GM12878 (cell line): ENCODE measurements at regions of chr12 and their contacts with region 1.

Region 1: DNA sequence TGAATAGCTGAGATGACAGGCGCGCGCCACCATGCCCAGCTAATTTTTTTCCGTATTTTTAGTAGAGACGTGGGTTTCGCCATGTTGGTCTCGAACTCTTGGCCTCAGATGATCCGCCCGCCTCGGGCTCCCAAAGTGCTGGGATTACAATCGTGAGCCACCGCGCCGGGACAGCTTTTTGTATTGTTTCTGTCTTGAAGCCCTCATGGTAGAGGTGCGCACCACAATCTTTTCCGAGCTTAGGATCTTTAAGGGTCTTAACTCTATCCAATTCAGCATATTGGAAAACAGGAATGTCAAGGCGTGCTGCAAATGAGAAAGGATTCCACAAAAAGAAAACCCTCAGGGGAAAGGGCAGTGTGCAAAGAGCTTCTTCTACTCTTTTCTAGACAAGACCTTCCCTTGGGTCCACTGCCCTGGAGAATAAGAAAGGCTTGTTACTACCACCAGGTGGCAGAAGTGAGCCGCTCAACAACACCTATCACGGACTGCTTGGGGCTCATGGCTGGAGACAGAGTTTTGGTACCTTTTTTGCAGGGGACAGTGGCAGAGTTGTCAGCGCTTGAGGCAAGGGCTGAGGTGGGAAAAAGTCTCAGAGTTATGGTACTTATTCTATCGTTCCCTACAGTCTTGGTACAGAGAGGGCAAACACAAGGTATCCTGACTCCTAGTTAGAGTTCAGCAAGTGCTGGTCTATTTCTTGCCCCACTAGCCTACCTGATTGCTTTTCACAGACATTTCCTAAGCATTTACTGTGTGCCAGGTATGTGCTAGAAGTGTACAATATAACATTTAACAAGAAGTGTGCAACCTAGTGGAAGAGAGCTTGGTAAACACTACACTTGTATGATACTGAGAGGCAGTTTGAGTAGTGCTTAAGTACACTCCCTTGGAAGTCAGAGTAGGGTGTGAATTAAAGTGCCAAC is 16.4 kb upstream of the SP7 start:
- DNase-seq: peak; percentile 68
- ATAC-seq: peak; percentile 100
- H3K4me3 ChIP-seq: no peak overlapping the region
- H3K27ac ChIP-seq: no peak overlapping the region
- H3K4me1 ChIP-seq: peaks cover 2% of the 10 kb centered on the region
- H3K27me3 ChIP-seq: no peaks in the 10 kb centered on the region
- CTCF ChIP-seq: peak; percentile 82 to 91 (median 89)
- EP300 ChIP-seq: no peak
- POLR2A ChIP-seq: no peak
- RAD21 ChIP-seq: peak; percentile 100

Region 2: DNA sequence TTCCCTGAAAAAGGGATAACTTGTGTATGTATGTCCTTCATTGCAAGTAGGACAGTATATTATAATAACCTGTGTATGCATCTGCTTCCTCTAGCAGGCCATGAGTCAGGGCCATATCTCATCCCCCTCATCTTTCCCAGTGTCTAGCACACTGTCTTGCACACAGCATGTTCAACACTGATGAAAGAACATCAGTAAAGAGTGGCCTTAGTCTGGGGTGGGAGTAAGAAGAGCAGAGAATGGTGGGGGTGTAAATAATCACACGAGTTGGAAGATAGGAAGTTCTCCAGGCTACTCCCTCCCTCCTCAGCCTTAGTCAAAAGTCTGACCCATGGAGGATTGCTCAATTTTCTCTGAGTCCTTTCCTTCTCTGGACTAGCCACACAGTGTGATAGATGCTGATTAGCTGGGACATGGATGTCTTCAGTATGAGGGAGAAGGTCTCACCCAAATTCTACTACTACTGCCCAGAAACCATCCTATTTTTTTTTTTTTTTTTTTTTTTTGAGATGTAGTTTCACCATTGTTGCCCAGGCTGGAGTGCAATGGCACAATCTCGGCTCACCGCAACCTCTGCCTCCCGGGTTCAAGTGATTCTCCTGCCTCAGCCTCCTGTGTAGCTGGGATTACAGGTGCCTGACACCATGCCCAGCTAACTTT is 12.8 kb after region 1 on chr12:
- CTCF ChIA-PET with region 1: interaction called, 12 read pairs
- POLR2A ChIA-PET with region 1: interaction called, 4 read pairs
- RAD21 ChIA-PET with region 1: interaction called, 6 read pairs
- SMC1A ChIA-PET with region 1: interaction called, 6 read pairs
- in situ Hi-C with region 1: no loop called
- intact Hi-C with region 1: no loop called
- DNase-seq: no peak
- ATAC-seq: peak; percentile 36
- H3K4me3 ChIP-seq: no peak overlapping the region
- H3K27ac ChIP-seq: no peak overlapping the region
- H3K4me1 ChIP-seq: peaks cover 3% of the 10 kb centered on the region
- H3K27me3 ChIP-seq: no peaks in the 10 kb centered on the region
- CTCF ChIP-seq: no peak
- EP300 ChIP-seq: no peak
- POLR2A ChIP-seq: no peak
- RAD21 ChIP-seq: no peak

Region 3: DNA sequence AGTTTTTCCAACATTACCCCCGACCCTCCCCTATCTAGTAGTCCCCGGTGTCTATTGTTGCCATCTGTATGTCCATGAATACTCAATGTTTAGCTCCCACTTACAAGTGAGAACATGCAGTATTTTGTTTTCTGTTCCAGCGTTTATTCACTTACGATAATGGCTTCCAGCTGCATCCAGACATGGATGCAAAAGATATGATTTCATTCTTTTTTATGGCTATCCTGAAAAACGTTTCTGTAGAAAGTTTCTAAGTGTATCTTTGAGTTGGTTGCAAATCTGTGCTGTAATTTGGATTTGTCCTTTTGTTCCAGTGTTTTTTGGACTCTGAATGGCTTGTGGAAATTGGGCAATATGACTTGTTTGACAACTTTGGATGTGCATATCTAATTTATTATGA is 39.1 kb after region 1 on chr12:
- CTCF ChIA-PET with region 1: interaction called, 164 read pairs
- POLR2A ChIA-PET with region 1: interaction called, 5 read pairs
- RAD21 ChIA-PET with region 1: interaction called, 27 read pairs
- SMC1A ChIA-PET with region 1: interaction called, 39 read pairs
- in situ Hi-C with region 1: no loop called
- intact Hi-C with region 1: no loop called
- DNase-seq: no peak
- ATAC-seq: no peak
- H3K4me3 ChIP-seq: no peak overlapping the region
- H3K27ac ChIP-seq: no peak overlapping the region
- H3K4me1 ChIP-seq: no peaks in the 10 kb centered on the region
- H3K27me3 ChIP-seq: no peaks in the 10 kb centered on the region
- CTCF ChIP-seq: no peak
- EP300 ChIP-seq: no peak
- POLR2A ChIP-seq: no peak
- RAD21 ChIP-seq: no peak

Region 4: GRCh38 chr12:53427905-53428594 is 75.5 kb after region 1 on chr12:
- CTCF ChIA-PET with region 1: interaction called, 225 read pairs
- POLR2A ChIA-PET with region 1: interaction called, 8 read pairs
- RAD21 ChIA-PET with region 1: interaction called, 90 read pairs
- SMC1A ChIA-PET with region 1: interaction called, 164 read pairs
- in situ Hi-C with region 1: loop called (anchors 5 kb)
- intact Hi-C with region 1: no loop called
- DNase-seq: no peak
- ATAC-seq: peak; percentile 56
- H3K4me3 ChIP-seq: no peak overlapping the region
- H3K27ac ChIP-seq: no peak overlapping the region
- H3K4me1 ChIP-seq: no peaks in the 10 kb centered on the region
- H3K27me3 ChIP-seq: no peaks in the 10 kb centered on the region
- CTCF ChIP-seq: no peak
- EP300 ChIP-seq: no peak
- POLR2A ChIP-seq: no peak
- RAD21 ChIP-seq: no peak

Region 5: DNA sequence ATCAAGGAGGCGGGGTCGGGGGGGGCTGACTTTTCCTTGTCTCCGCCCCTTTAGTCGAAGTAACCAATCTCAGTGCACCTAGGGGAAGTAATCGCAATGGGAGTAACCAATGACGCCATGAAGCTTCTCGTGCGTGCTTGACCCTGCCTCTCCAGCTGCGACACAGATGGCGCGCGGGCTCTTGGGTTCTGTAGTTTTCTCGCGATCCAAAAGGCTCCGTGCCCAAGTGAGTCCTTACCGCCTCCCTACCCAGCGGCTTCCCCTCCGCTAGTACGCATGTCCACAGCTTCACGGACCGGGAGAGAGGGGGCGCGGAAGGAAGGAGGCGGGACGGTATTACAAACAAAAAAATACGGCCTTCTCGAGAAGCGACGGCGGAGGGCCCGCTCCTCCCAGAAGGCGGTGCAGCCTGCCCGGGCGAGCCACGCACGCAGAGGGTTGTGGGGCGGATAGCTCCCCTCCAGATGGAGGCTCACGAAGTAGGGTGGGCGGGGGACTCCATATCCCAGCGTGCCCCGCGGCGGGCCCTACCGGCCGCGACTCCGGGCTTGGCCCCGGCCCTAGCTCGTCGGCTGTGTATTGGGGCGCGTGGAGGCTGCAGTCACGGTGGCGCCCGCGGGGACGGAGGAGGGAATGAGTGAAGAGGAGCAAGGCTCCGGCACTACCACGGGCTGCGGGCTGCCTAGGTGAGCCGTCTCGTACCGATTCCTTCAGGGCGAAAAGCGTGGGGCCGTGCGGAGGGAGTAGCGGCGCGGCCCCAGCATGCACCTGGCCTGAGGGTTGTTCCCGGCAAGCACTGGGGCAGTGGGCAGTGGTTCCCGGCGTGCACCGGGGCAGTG is 148.4 kb after region 1 on chr12 and contains the start of gene TARBP2:
- CTCF ChIA-PET with region 1: interaction called, 10 read pairs
- POLR2A ChIA-PET with region 1: interaction called, 4 read pairs
- RAD21 ChIA-PET with region 1: interaction called, 13 read pairs
- SMC1A ChIA-PET with region 1: interaction called, 9 read pairs
- in situ Hi-C with region 1: no loop called
- intact Hi-C with region 1: no loop called
- DNase-seq: peak; percentile 98
- ATAC-seq: peak; percentile 84
- H3K4me3 ChIP-seq: peak within 1 kb of the TSS; percentile 76
- H3K27ac ChIP-seq: peak within 1 kb of the TSS; percentile 95
- H3K4me1 ChIP-seq: peaks cover 13% of the 10 kb centered on the region
- H3K27me3 ChIP-seq: no peaks in the 10 kb centered on the region
- CTCF ChIP-seq: no peak
- EP300 ChIP-seq: peak in 1 of 2 experiments; percentile 38; a peak in 1 of 4 replicates
- POLR2A ChIP-seq: peak; percentile 94
- RAD21 ChIP-seq: no peak
- polyA plus RNA-seq, gene TARBP2: 5.5 to 9.4 TPM